ENCODE measurements at regions of chr19 and their contacts with region 1.

Region 1: GRCh38 chr19:12789904-12790619 is 1.2 kb upstream of the JUNB start:
- DNase-seq: peak; percentile 90 to 93 (median 92)
- H3K4me3 ChIP-seq: peak overlapping the region; percentile 85 to 100
- H3K4me3 Mint-ChIP-seq: peak overlapping the region; percentile 92 to 98 (median 95)
- H3K27ac ChIP-seq: peak overlapping the region; percentile 100
- H3K27ac Mint-ChIP-seq: peak overlapping the region in 6 of 7 donors; percentile 99 to 100 (median 100)
- H3K4me1 ChIP-seq: peaks cover 55% of the 10 kb centered on the region
- H3K4me1 Mint-ChIP-seq: peaks cover 20 to 47% (median 28%) of the 10 kb centered on the region in 4 donors
- H3K27me3 ChIP-seq: no peaks in the 10 kb centered on the region
- H3K27me3 Mint-ChIP-seq: no peaks in the 10 kb centered on the region

Region 2: GRCh38 chr19:12681074-12681951 is 108.7 kb before region 1 on chr19 and contains the start of gene DHPS:
- CTCF ChIA-PET with region 1: interaction called, 5 read pairs
- POLR2A ChIA-PET with region 1: interaction called, 21 read pairs
- intact Hi-C with region 1: no loop called
- DNase-seq: peak; percentile 90 to 96 (median 94)
- H3K4me3 ChIP-seq: peak within 1 kb of the TSS; percentile 73 to 98
- H3K4me3 Mint-ChIP-seq: peak within 1 kb of the TSS; percentile 90 to 99 (median 98)
- H3K27ac ChIP-seq: peak within 1 kb of the TSS; percentile 98
- H3K27ac Mint-ChIP-seq: peak within 1 kb of the TSS; percentile 83 to 99 (median 97)
- H3K4me1 ChIP-seq: peaks cover 22% of the 10 kb centered on the region
- H3K4me1 Mint-ChIP-seq: peaks cover 12 to 35% (median 25%) of the 10 kb centered on the region in 4 donors
- H3K27me3 ChIP-seq: no peaks in the 10 kb centered on the region
- H3K27me3 Mint-ChIP-seq: no peaks in the 10 kb centered on the region
- total RNA-seq, gene DHPS: 195 to 197 TPM

Region 3: DNA sequence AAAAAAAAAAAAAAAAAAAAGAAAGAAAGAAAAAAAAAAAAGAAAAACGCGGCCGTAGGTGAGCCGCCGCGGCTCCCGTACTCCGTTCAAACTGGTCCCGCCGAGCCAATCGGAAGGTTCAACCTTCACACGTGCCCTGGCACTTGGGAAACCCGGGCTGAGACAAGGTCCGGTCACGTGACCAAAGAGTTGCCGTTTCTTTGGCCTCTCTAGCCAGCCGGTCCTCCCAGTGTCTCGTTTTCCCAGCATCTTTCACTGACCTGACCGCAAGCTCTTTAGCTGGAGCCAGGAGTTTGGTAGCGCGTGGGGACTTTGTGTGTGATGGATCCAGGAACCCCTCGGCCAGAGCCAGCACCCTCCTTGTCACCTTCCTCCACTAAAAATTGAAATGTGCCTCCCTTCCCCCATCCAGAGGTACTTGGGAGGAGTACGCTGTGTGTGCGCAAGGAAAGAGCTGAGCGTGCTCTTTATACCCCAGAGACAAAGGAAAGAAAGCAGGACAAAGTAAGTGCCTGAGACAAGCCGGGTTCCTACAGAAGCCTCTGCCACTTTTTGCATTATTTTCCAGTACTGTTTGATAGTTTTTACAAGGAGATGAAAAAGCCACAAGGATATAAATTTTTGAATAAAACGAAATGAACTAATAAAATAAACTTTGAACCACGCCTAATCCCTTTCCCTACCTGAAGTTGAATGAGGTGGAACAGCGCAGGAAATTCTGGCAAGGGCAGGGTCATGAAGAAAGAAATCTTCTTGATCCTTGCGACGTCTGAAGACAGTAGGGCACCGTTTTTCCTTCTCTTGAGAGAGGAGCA is 67.3 kb before region 1 on chr19:
- CTCF ChIA-PET with region 1: interaction called, 13 read pairs
- POLR2A ChIA-PET with region 1: interaction called, 54 read pairs
- intact Hi-C with region 1: no loop called
- DNase-seq: peak; percentile 91 to 97 (median 95)
- H3K4me3 ChIP-seq: peak overlapping the region; percentile 21 to 78
- H3K4me3 Mint-ChIP-seq: peak overlapping the region; percentile 87 to 98 (median 92)
- H3K27ac ChIP-seq: peak overlapping the region; percentile 73
- H3K27ac Mint-ChIP-seq: peak overlapping the region; percentile 88 to 98 (median 93)
- H3K4me1 ChIP-seq: peaks cover 30% of the 10 kb centered on the region
- H3K4me1 Mint-ChIP-seq: peaks cover 21 to 54% (median 35%) of the 10 kb centered on the region in 4 donors
- H3K27me3 ChIP-seq: no peaks in the 10 kb centered on the region
- H3K27me3 Mint-ChIP-seq: peaks cover 0 to 1% of the 10 kb centered on the region in 2 donors

Region 4: GRCh38 chr19:12757544-12758274 is 32.4 kb before region 1 on chr19:
- CTCF ChIA-PET with region 1: interaction called, 906 read pairs
- POLR2A ChIA-PET with region 1: interaction called, 15 read pairs
- intact Hi-C with region 1: no loop called
- DNase-seq: peak in 4 of 5 donors; percentile 56 to 61 (median 58)
- H3K4me3 ChIP-seq: no peak overlapping the region
- H3K4me3 Mint-ChIP-seq: peak overlapping the region in 5 of 8 donors; percentile 5 to 41 (median 32)
- H3K27ac ChIP-seq: no peak overlapping the region
- H3K27ac Mint-ChIP-seq: no peak overlapping the region
- H3K4me1 ChIP-seq: peaks cover 3% of the 10 kb centered on the region
- H3K4me1 Mint-ChIP-seq: peaks cover 4 to 10% (median 5%) of the 10 kb centered on the region in 4 donors
- H3K27me3 ChIP-seq: no peaks in the 10 kb centered on the region
- H3K27me3 Mint-ChIP-seq: peaks cover 1 to 7% of the 10 kb centered on the region in 2 donors

Region 5: GRCh38 chr19:12777217-12778016 is 12.6 kb before region 1 on chr19:
- CTCF ChIA-PET with region 1: interaction called, 906 read pairs
- POLR2A ChIA-PET with region 1: interaction called, 1,162 read pairs
- intact Hi-C with region 1: loop called (anchors 1 kb)
- DNase-seq: peak; percentile 77 to 83 (median 80)
- H3K4me3 ChIP-seq: peak overlapping the region; percentile 69 to 76
- H3K4me3 Mint-ChIP-seq: peak overlapping the region; percentile 85 to 92 (median 87)
- H3K27ac ChIP-seq: peak overlapping the region; percentile 86
- H3K27ac Mint-ChIP-seq: peak overlapping the region; percentile 92 to 97 (median 94)
- H3K4me1 ChIP-seq: peaks cover 42% of the 10 kb centered on the region
- H3K4me1 Mint-ChIP-seq: peaks cover 25 to 52% (median 35%) of the 10 kb centered on the region in 4 donors
- H3K27me3 ChIP-seq: no peaks in the 10 kb centered on the region
- H3K27me3 Mint-ChIP-seq: no peaks in the 10 kb centered on the region

Region 6: DNA sequence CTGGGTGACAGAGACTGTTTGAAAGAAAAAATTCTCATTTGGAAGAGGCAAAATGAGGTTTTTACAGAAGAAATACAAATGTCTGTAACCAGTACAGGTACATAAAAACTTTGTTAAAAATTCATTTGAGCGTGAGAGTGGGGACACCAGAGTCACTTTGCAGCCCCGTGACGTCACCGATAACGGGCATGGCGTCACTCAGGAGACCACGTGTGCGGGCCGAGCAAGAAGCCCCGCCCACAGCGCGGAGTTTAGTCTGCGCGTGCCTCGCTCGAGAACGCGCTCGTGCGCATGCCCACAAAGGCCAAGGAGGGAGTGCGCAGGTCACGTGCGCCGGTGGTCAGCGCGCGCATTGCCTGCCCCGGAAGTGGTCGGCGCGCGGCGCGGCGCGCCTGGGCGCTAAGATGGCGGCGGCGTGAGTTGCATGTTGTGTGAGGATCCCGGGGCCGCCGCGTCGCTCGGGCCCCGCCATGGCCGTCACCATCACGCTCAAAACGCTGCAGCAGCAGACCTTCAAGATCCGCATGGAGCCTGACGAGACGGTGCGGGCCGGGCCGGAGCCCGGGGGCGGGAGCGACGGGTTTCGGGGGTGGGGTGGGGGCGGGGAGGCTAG is 155.5 kb after region 1 on chr19 and contains the start of gene RAD23A:
- CTCF ChIA-PET with region 1: no interaction called
- POLR2A ChIA-PET with region 1: interaction called, 3 read pairs
- intact Hi-C with region 1: loop called (anchors 5 kb)
- DNase-seq: peak; percentile 97 to 98 (median 98)
- H3K4me3 ChIP-seq: peak within 1 kb of the TSS in 1 of 2 donors; percentile 64
- H3K4me3 Mint-ChIP-seq: peak within 1 kb of the TSS; percentile 87 to 96 (median 90)
- H3K27ac ChIP-seq: peak within 1 kb of the TSS; percentile 78
- H3K27ac Mint-ChIP-seq: peak within 1 kb of the TSS; percentile 96 to 99 (median 97)
- H3K4me1 ChIP-seq: peaks cover 32% of the 10 kb centered on the region
- H3K4me1 Mint-ChIP-seq: peaks cover 15 to 57% (median 30%) of the 10 kb centered on the region in 4 donors
- H3K27me3 ChIP-seq: no peaks in the 10 kb centered on the region
- H3K27me3 Mint-ChIP-seq: peaks cover 0 to 2% of the 10 kb centered on the region in 2 donors
- total RNA-seq, gene RAD23A: 88.6 to 98.4 TPM